CD4-positive, alpha-beta memory T cell (primary cell): ENCODE measurements at regions of chr5 and their contacts with region 1.

Region 1: DNA sequence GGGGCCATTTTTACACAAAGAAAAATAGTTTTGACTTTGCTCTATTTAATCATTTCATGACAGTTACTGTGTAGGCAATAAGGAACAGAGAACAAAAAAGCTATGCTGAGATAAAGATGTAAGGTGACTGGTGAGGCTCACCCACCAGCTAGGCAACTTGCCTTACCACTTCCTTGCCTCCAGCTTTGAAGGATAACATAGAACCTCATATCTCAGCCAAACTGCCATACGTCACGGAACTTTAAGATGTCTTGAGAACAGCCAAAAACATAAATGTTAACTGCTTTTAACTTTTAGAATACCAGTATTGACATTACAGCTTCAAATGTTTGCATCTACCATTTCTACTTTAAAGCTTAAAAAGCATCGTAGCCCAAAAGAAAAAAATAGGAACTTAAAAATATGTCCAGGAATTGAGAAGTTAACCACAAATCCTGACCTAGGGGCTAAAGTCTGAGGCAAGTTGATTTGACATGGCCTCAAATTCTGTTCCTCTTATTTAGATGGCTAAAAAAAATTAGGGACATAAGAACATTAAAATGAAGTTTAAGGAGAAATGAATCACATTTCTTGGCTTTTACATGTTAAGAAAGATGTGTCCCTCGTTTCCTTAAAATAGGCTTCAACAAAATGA is 7.7 kb upstream of the GCNT4 start:
- DNase-seq: peak; percentile 68 to 85 (median 81)
- H3K4me3 ChIP-seq: no peak overlapping the region
- H3K4me3 Mint-ChIP-seq: peak overlapping the region in 7 of 8 donors; percentile 29 to 75 (median 70)
- H3K27ac ChIP-seq: peak overlapping the region; percentile 37
- H3K27ac Mint-ChIP-seq: peak overlapping the region; percentile 91 to 99 (median 96)
- H3K4me1 ChIP-seq: peaks cover 82% of the 10 kb centered on the region
- H3K4me1 Mint-ChIP-seq: peaks cover 38 to 76% (median 60%) of the 10 kb centered on the region in 4 donors
- H3K27me3 ChIP-seq: no peaks in the 10 kb centered on the region
- H3K27me3 Mint-ChIP-seq: no peaks in the 10 kb centered on the region

Region 2: GRCh38 chr5:74870314-74871067 is 189.5 kb before region 1 on chr5:
- CTCF ChIA-PET with region 1: no interaction called
- POLR2A ChIA-PET with region 1: no interaction called
- intact Hi-C with region 1: no loop called
- DNase-seq: no peak
- H3K4me3 ChIP-seq: no peak overlapping the region
- H3K4me3 Mint-ChIP-seq: no peak overlapping the region
- H3K27ac ChIP-seq: no peak overlapping the region
- H3K27ac Mint-ChIP-seq: no peak overlapping the region
- H3K4me1 ChIP-seq: peaks cover 5% of the 10 kb centered on the region
- H3K4me1 Mint-ChIP-seq: peaks cover 2 to 9% (median 4%) of the 10 kb centered on the region in 4 donors
- H3K27me3 ChIP-seq: no peaks in the 10 kb centered on the region
- H3K27me3 Mint-ChIP-seq: peaks cover 1 to 4% of the 10 kb centered on the region in 2 donors

Region 3: DNA sequence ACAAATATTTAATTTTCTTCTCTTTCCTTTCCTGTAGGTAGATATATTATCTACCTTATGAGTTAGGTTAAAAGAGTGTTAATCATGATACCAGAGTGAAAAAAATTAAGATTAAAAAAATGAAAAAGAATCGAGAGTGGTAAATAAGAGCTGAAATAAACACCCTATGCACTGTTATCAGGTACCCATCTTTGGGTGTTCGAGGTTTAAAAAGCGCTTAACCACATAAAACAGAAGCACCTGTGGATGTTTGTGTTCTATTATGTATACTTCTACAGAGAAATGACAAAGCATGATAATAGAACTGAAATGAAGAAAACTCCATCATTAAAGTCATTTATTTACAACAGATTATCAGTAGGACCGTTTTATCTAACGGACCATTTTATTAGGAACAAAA is 18.0 kb after region 1 on chr5:
- CTCF ChIA-PET with region 1: interaction called, 4 read pairs
- POLR2A ChIA-PET with region 1: interaction called, 9 read pairs
- intact Hi-C with region 1: loop called (anchors 1 kb)
- DNase-seq: peak; percentile 36 to 75 (median 66)
- H3K4me3 ChIP-seq: no peak overlapping the region
- H3K4me3 Mint-ChIP-seq: peak overlapping the region in 3 of 8 donors; percentile 33 to 57 (median 52)
- H3K27ac ChIP-seq: no peak overlapping the region
- H3K27ac Mint-ChIP-seq: peak overlapping the region in 2 of 7 donors; percentile 29 to 73
- H3K4me1 ChIP-seq: peaks cover 16% of the 10 kb centered on the region
- H3K4me1 Mint-ChIP-seq: peaks cover 4 to 26% (median 15%) of the 10 kb centered on the region in 4 donors
- H3K27me3 ChIP-seq: no peaks in the 10 kb centered on the region
- H3K27me3 Mint-ChIP-seq: no peaks in the 10 kb centered on the region

Region 4: GRCh38 chr5:75837258-75837841 is 777.3 kb after region 1 on chr5:
- CTCF ChIA-PET with region 1: no interaction called
- POLR2A ChIA-PET with region 1: no interaction called
- intact Hi-C with region 1: no loop called
- DNase-seq: no peak
- H3K4me3 ChIP-seq: no peak overlapping the region
- H3K4me3 Mint-ChIP-seq: no peak overlapping the region
- H3K27ac ChIP-seq: no peak overlapping the region
- H3K27ac Mint-ChIP-seq: no peak overlapping the region
- H3K4me1 ChIP-seq: no peaks in the 10 kb centered on the region
- H3K4me1 Mint-ChIP-seq: no peaks in the 10 kb centered on the region
- H3K27me3 ChIP-seq: no peaks in the 10 kb centered on the region
- H3K27me3 Mint-ChIP-seq: peaks cover 4 to 8% of the 10 kb centered on the region in 2 donors